Naive thymus-derived CD4-positive, alpha-beta T cell (primary cell): ENCODE measurements at regions of chr14 and their contacts with region 1.

Region 1: DNA sequence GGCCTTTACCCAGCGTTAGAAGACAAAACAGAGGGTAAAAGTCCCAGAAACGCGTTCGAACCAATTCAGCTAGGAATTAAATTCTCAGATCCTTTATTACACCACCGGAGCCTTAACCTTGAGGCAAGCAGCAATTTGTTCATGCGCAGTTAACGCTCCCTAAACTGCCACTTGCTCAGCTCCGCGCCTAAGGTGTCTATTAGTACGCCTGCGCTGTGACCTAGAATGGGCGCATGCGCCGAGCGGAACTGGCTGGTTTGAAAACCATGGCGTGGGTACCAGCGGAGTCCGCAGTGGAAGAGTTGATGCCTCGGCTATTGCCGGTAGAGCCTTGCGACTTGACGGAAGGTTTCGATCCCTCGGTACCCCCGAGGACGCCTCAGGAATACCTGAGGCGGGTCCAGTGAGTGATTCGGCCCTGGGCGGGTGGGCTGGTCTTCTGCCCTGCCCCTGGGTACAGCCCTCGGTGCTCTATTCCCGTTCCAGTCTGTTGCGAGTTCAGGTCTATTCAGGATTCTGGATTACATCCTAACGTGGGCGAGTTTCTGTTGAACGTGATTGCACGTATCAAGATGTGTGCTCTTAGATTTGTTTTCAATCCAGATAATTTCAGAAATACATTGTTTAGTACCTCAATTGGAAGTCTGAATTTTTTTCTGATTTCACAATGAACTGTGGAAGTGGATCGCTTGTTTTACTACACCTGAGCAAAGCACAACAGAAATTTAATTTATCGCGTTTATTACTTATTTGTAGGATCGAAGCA is at the start of gene GEMIN2:
- DNase-seq: peak; percentile 88 to 95 (median 92)
- ATAC-seq: peak; percentile 99
- H3K4me3 ChIP-seq: peak within 1 kb of the TSS; percentile 68
- H3K4me3 Mint-ChIP-seq: peak within 1 kb of the TSS; percentile 89 to 99 (median 97)
- H3K27ac ChIP-seq: peak within 1 kb of the TSS; percentile 80
- H3K27ac Mint-ChIP-seq: peak within 1 kb of the TSS; percentile 81 to 98 (median 94)
- H3K4me1 ChIP-seq: peaks cover 12 to 13% of the 10 kb centered on the region in 2 donors
- H3K4me1 Mint-ChIP-seq: peaks cover 10 to 36% (median 24%) of the 10 kb centered on the region in 7 donors
- H3K27me3 ChIP-seq: no peaks in the 10 kb centered on the region
- H3K27me3 Mint-ChIP-seq: peaks cover 0 to 3% (median 0%) of the 10 kb centered on the region in 5 donors
- total RNA-seq, gene GEMIN2: 7.2 to 20.9 (median 18.6) TPM

Region 2: GRCh38 chr14:39060818-39061437 is 53.3 kb before region 1 on chr14:
- CTCF ChIA-PET with region 1: no interaction called
- POLR2A ChIA-PET with region 1: no interaction called
- intact Hi-C with region 1: no loop called
- DNase-seq: no peak
- ATAC-seq: no peak
- H3K4me3 ChIP-seq: no peak overlapping the region
- H3K4me3 Mint-ChIP-seq: no peak overlapping the region
- H3K27ac ChIP-seq: no peak overlapping the region
- H3K27ac Mint-ChIP-seq: no peak overlapping the region
- H3K4me1 ChIP-seq: no peaks in the 10 kb centered on the region
- H3K4me1 Mint-ChIP-seq: peaks cover 0 to 7% (median 0%) of the 10 kb centered on the region in 7 donors
- H3K27me3 ChIP-seq: no peaks in the 10 kb centered on the region
- H3K27me3 Mint-ChIP-seq: no peaks in the 10 kb centered on the region

Region 3: GRCh38 chr14:39169541-39169900 is 55.3 kb after region 1 on chr14:
- CTCF ChIA-PET with region 1: no interaction called
- POLR2A ChIA-PET with region 1: interaction called, 20 read pairs
- intact Hi-C with region 1: loop called (anchors 1 kb)
- DNase-seq: no peak
- ATAC-seq: no peak
- H3K4me3 ChIP-seq: peak overlapping the region; percentile 88
- H3K4me3 Mint-ChIP-seq: peak overlapping the region; percentile 88 to 100 (median 92)
- H3K27ac ChIP-seq: peak overlapping the region; percentile 98
- H3K27ac Mint-ChIP-seq: peak overlapping the region; percentile 90 to 99 (median 98)
- H3K4me1 ChIP-seq: peaks cover 20 to 31% of the 10 kb centered on the region in 2 donors
- H3K4me1 Mint-ChIP-seq: peaks cover 16 to 70% (median 59%) of the 10 kb centered on the region in 7 donors
- H3K27me3 ChIP-seq: no peaks in the 10 kb centered on the region
- H3K27me3 Mint-ChIP-seq: no peaks in the 10 kb centered on the region

Region 4: DNA sequence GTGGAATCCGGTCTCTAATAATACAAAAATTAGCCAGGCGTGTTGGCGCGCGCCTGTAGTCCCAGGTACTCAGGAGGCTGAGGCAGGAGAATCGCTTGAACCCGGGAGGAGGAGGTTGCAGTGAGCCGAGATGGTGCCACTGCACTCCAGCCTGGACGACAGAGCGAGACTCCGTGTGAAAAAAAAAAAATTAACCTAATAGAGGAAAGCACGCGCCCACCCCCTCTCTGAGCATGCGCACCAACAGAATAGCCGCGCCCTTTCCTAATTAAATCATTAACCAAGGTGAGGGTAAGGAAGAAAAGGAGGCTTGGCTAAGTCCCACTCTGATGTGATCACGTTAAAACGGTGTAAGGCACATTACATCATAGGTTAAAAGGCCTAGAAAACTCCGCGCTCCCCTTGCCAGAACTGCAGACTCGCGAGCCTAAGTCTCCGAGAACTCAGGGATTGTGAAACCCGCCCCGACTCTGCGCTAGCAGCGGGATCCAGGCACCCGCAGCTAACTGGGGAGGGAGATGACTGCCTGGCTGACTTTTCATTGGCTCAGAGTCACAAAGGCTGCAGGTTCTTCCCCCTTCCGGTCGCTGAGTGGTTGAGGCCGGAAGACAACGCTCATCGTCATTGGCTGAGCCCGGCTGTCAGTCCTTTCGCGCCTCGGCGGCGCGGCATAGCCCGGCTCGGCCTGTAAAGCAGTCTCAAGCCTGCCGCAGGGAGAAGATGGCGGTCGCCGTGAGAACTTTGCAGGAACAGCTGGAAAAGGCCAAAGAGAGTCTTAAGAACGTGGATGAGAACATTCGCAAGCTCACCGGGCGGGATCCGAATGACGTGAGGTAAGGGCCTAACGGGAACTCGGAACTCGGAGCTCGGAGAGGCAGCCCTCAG is 60.5 kb after region 1 on chr14 and contains the start of gene PNN:
- CTCF ChIA-PET with region 1: no interaction called
- POLR2A ChIA-PET with region 1: interaction called, 20 read pairs
- intact Hi-C with region 1: loop called (anchors 1 kb)
- DNase-seq: peak; percentile 83 to 99 (median 98)
- ATAC-seq: peak; percentile 94
- H3K4me3 ChIP-seq: peak within 1 kb of the TSS; percentile 80
- H3K4me3 Mint-ChIP-seq: peak within 1 kb of the TSS; percentile 95 to 100 (median 99)
- H3K27ac ChIP-seq: peak within 1 kb of the TSS; percentile 90
- H3K27ac Mint-ChIP-seq: peak within 1 kb of the TSS; percentile 96 to 100 (median 99)
- H3K4me1 ChIP-seq: peaks cover 16 to 28% of the 10 kb centered on the region in 2 donors
- H3K4me1 Mint-ChIP-seq: peaks cover 27 to 74% (median 50%) of the 10 kb centered on the region in 7 donors
- H3K27me3 ChIP-seq: no peaks in the 10 kb centered on the region
- H3K27me3 Mint-ChIP-seq: no peaks in the 10 kb centered on the region
- total RNA-seq, gene PNN: 80.1 to 120 (median 102) TPM